WTC11 (cell line): ENCODE measurements at regions of chr1 and their contacts with region 1.

Region 1: DNA sequence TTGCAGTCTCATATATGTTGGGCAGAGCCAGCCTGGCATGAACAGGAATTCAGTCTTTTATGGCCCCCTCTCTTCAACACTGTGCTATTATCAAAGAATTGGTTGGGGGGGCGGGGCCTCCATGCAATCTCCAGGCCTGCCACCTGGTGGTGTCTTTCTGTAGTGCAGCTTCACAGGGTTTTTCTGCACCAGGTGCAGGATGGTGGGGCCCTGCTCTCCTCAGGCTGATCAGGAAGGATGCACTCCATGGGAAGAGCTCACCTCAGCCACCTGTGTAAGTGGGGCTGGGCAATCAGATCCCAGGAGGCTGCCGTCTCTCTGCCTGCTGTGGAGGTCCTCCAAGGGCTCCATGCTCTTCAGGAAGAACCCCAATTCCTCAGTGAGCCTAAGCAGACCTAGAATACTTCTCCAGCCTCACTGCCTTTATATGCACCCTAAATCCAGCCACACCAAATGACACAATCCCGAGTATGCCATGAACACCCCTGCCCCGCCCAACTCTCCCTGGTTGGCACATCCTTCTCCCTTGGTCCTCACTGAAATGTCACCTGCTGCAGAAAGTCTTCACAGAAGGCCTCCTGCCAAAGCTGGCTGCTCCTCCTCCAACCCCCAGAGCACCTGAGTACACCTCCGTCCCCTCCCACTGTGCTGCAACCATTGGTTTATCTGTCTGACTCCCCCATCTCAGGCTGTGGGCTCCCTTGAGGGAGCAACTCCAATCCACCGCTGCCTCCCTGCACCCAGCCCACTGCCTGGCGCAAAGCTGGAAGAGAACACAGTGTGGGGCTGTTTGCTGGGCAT is 16.5 kb downstream of the STK40 start:
- DNase-seq: peak; percentile 92
- ATAC-seq: peak; percentile 76
- H3K4me3 Mint-ChIP-seq: no peak overlapping the region
- H3K27ac Mint-ChIP-seq: peak overlapping the region; percentile 75
- H3K4me1 Mint-ChIP-seq: peaks cover 48% of the 10 kb centered on the region
- H3K27me3 Mint-ChIP-seq: no peaks in the 10 kb centered on the region
- CTCF ChIP-seq: peak; percentile 87

Region 2: GRCh38 chr1:36323597-36324352 is 45.5 kb before region 1 on chr1 and contains the start of gene EVA1B:
- CTCF ChIA-PET with region 1: interaction called, 24 read pairs
- POLR2A ChIA-PET with region 1: interaction called, 7 read pairs
- DNase-seq: peak; percentile 74
- ATAC-seq: peak; percentile 15
- H3K4me3 Mint-ChIP-seq: peak within 1 kb of the TSS; percentile 76
- H3K27ac Mint-ChIP-seq: peak within 1 kb of the TSS; percentile 65
- H3K4me1 Mint-ChIP-seq: peaks cover 25% of the 10 kb centered on the region
- H3K27me3 Mint-ChIP-seq: peaks cover 10% of the 10 kb centered on the region
- CTCF ChIP-seq: no peak
- total RNA-seq, gene EVA1B: 32.0 to 45.2 TPM (median 41.5 TPM) in 3 replicates

Region 3: DNA sequence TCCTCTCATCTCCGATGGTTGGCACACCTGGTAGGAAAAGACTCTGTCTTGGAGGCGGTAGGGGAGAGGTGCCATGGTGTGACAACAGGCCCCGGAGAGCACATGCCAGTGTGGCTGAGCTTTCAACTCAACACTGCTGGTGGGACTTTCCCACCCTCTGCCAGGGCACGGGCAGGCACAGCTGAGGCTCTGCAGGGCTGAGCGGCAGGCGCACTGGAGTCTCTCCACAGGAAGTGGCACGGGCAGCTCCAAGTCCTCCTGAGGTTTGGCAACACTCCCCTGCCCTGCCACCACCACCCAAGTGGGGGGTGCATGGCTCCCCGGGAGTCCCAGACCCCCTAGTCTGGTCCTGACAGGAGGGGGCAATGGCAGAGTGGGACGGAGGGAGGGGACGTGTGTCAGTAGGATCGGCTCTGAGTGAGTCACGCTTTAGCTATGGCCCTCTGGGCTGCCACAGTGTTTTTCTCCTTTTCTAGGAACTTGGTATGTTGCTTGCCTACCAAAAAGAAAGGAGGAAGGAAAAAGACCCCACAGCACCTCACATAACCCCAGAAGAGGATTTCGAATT is 18.5 kb before region 1 on chr1:
- CTCF ChIA-PET with region 1: interaction called, 76 read pairs
- POLR2A ChIA-PET with region 1: no interaction called
- DNase-seq: no peak
- ATAC-seq: no peak
- H3K4me3 Mint-ChIP-seq: no peak overlapping the region
- H3K27ac Mint-ChIP-seq: peak overlapping the region; percentile 30; the same call in 1 of the 2 replicates
- H3K4me1 Mint-ChIP-seq: peaks cover 8% of the 10 kb centered on the region
- H3K27me3 Mint-ChIP-seq: no peaks in the 10 kb centered on the region
- CTCF ChIP-seq: no peak

Region 4: DNA sequence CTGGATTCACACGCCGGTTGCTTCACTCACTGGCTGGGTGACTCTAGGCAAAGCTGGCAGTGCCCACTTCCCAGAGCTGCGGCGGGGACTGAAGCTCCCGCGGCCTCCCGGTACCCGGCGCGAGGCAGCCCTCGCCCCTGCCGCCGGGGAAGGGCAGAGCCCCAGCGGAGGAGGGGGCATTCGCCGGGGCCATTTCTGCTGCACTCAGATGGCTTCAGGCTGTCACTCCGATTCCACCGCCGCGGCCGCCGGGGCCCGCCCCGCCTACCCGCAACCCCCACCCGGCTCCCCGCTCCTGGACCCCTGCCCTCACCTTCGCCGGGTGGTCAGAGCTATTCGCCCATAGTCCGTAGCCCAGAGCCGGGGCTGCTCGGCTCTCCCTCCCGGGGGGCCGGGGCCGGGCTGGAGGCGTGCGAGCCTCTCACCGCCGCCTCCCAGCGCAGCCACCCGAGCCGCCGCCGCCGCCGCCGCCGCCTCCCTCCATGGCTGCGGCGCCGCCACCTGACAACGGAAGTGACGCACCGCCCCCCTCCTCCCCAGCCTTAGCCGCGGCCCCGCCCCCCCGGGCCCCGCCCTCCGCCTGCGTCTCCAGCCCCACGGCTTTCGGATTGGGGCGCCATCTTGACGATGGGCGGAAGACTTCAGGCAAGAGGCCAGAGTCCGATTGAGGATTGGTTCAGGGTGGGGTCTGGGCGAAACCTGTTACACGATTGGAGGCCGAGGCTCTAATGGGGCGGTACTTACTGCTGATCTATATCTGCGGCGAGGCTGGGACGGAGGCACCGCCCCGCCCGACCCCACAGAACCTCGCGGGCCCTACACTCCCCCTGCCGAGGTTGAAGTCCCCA is 16.4 kb after region 1 on chr1 and contains the start of gene STK40:
- CTCF ChIA-PET with region 1: interaction called, 36 read pairs
- POLR2A ChIA-PET with region 1: interaction called, 10 read pairs
- DNase-seq: peak; percentile 97
- ATAC-seq: peak; percentile 96
- H3K4me3 Mint-ChIP-seq: peak within 1 kb of the TSS; percentile 94
- H3K27ac Mint-ChIP-seq: peak within 1 kb of the TSS; percentile 99
- H3K4me1 Mint-ChIP-seq: peaks cover 31% of the 10 kb centered on the region
- H3K27me3 Mint-ChIP-seq: no peaks in the 10 kb centered on the region
- CTCF ChIP-seq: no peak
- total RNA-seq, gene STK40: 17.8 to 24.7 TPM (median 20.4 TPM) in 3 replicates

Region 5: GRCh38 chr1:36397378-36398230 is 28.3 kb after region 1 on chr1 and contains the start of gene LSM10:
- CTCF ChIA-PET with region 1: interaction called, 37 read pairs
- POLR2A ChIA-PET with region 1: interaction called, 8 read pairs
- DNase-seq: peak; percentile 96
- ATAC-seq: peak; percentile 51
- H3K4me3 Mint-ChIP-seq: peak within 1 kb of the TSS; percentile 89
- H3K27ac Mint-ChIP-seq: peak within 1 kb of the TSS; percentile 98
- H3K4me1 Mint-ChIP-seq: peaks cover 24% of the 10 kb centered on the region
- H3K27me3 Mint-ChIP-seq: no peaks in the 10 kb centered on the region; the same call in 1 of the 2 replicates
- CTCF ChIP-seq: no peak
- total RNA-seq, gene LSM10: 49.1 to 56.3 TPM (median 49.3 TPM) in 3 replicates

Region 6: DNA sequence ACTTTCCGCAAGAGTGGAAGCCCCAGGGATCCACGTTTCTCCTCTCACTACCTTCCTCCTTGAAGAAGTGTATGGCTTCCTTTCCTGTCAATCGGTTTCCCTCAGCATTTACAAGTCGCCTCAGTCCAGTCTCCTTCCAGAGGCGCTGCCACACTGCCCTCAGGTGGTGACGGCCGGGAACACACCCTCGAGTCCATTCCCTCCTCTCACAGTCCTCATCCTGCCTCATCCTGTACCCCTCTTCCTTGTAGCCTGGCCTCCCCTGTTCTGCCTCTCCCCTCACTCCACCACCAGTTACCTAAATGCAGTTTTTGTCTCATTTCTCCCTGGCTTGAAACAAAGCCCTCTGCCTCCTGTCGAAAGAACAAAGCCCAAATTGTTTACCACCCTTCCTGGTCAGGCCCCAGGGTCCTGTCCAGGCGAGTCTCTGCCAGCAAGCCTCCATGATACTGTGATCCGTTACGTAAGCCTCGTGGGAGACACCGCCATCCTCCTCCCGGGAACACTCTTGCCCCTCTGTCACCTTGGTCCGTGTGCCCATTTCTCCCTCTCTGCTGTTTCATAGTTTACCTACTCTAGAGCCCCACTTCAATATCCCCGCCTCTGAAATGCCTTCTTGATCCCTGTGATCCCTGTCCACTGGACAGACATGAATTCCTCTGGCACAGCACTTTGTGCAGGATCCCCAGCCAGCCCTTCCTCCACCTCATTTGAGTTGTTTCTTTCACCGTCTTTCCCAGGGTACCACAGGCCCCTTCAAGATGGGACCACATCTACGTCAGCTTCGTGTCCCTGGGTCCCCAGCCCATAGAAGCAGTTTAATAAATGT is 51.8 kb after region 1 on chr1:
- CTCF ChIA-PET with region 1: interaction called, 13 read pairs
- POLR2A ChIA-PET with region 1: no interaction called
- DNase-seq: peak; percentile 97
- ATAC-seq: peak; percentile 98
- H3K4me3 Mint-ChIP-seq: no peak overlapping the region
- H3K27ac Mint-ChIP-seq: peak overlapping the region; percentile 80
- H3K4me1 Mint-ChIP-seq: peaks cover 11% of the 10 kb centered on the region
- H3K27me3 Mint-ChIP-seq: no peaks in the 10 kb centered on the region; the same call in 1 of the 2 replicates
- CTCF ChIP-seq: peak; percentile 88

Region 7: GRCh38 chr1:36773827-36774541 is 404.7 kb after region 1 on chr1:
- CTCF ChIA-PET with region 1: no interaction called
- POLR2A ChIA-PET with region 1: no interaction called
- DNase-seq: no peak
- ATAC-seq: no peak
- H3K4me3 Mint-ChIP-seq: no peak overlapping the region
- H3K27ac Mint-ChIP-seq: no peak overlapping the region
- H3K4me1 Mint-ChIP-seq: peaks cover 61% of the 10 kb centered on the region
- H3K27me3 Mint-ChIP-seq: peaks cover 22% of the 10 kb centered on the region
- CTCF ChIP-seq: no peak